ENCODE measurements at regions of chr16 and their contacts with region 1.

Region 1: GRCh38 chr16:30335598-30336474 is 19.3 kb downstream of the CD2BP2 start:
- DNase-seq: no peak

Region 2: DNA sequence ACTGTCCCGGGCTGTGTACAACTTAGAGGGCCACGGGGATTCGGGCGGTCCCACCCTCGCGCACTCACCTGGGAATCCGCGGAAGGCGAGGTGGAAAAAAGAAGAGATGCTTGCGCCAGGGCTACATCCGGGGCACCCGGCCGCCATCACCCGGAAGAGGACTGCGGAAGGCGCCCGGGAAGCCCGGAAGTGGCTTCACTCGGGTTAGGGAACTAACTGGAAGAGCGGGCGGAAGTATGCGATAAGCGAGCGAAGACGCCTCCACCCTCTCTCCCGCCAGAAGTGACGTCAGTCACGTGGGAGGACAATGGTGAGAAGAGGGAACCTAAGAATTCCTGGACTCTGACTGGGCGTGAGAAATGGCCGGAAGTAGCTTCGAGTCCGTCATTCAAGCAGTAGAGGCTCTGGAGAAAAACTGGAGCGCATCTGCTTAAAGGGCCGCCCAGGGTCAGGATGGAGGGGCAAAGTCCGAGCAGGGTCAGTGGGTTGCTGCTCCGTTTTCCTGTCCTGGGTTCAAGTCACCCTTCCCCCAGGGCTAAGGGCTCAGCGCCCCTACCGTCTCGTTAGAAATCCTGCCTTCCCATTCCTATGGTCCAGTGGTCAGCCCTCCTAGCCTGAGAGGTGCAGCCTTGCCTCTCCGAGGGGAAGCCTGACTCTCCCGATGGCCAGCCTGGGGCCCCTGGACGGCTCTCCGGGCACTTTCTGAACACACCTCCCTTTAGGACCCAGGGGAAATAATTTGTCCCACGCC is 19.5 kb after region 1 on chr16 and contains the start of gene CD2BP2:
- CTCF ChIA-PET with region 1: no interaction called
- POLR2A ChIA-PET with region 1: interaction called, 10 read pairs
- DNase-seq: peak; percentile 99

Region 3: GRCh38 chr16:30377050-30377811 is 41.4 kb after region 1 on chr16:
- CTCF ChIA-PET with region 1: no interaction called
- POLR2A ChIA-PET with region 1: no interaction called
- DNase-seq: no peak

Region 4: DNA sequence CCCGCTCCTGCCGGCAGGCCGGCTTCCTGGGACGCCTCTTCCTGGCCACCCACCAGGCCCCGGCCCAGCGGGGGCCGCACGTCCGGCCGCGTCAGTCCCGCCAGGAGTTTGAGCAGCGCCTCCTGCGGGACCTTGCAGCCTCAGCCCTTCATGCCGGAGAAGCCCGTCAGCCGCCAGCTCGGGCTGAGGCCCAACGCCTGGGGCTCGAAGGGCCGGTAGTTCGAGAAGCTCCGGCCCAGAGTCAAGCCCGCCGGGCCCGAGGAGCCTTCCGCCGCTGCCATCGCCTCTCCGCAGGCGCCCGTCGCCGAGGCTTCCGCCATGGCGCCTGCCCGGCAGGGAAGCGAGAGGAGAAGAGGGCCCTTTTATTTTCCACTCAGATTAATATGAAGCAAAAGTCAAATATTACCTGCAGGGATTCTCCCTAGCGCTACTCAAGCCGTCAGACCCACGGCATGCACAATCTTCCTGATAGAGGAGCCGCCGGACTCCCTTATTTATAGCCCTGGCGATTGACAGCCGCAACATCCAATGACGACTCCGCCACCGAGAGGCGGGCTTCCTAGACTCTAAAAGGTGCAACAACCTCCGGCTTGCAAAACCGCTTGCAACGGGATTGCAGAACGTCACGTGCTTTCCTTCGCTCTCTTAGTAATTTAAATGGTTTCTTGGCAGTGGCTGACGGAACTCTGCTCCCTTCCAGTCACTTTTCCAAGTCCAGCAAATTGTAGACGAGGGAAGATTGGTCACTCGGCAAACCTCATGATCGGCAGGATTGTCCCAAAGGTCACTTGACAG is 109.8 kb after region 1 on chr16 and contains the start of gene SEPHS2:
- CTCF ChIA-PET with region 1: no interaction called
- POLR2A ChIA-PET with region 1: no interaction called
- DNase-seq: peak; percentile 98

Measured in HEK293T (cell line).